HEK293 (cell line): ENCODE measurements at regions of chr19 and their contacts with region 1.

Region 1: DNA sequence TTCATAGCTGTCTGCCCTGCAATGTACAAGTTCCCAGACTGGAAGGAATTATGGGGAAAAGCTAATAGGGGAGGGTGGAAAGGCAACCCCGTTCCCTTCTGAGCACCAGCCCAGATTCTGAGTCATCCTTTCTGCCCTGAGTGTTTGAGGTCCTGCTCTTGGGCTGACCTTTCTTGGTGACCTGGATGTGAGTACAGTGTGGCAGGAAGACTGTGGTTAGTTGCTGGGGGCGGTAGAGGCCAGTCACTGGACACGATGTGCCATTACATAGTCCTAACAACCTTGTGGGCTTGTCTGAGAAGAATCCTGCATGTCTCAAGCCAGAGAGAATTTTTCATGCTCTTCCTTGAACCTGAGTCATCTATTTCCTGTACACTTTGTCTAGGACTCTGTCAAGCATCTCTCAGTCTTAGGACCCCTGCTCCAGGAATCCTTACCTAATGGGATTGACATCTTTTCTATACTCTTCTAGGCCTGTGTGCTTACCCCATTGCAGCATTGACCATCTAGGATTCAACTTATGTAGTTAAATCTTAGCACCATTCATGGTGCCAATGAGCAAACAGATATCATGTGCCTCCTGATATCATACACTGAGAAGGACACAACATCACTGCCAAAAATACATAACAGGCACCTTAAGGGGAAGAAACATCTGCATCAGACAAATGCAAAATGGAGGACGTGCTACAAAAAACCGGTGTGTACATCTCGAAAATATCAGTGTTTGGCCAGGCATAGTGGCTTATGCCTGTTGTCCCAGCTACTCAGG is 8.1 kb upstream of the ANGPTL4 start:
- H3K4me3 ChIP-seq: no peak overlapping the region
- H3K27ac ChIP-seq: no peak overlapping the region
- H3K4me1 ChIP-seq: no peaks in the 10 kb centered on the region
- CTCF ChIP-seq: no peak

Region 2: DNA sequence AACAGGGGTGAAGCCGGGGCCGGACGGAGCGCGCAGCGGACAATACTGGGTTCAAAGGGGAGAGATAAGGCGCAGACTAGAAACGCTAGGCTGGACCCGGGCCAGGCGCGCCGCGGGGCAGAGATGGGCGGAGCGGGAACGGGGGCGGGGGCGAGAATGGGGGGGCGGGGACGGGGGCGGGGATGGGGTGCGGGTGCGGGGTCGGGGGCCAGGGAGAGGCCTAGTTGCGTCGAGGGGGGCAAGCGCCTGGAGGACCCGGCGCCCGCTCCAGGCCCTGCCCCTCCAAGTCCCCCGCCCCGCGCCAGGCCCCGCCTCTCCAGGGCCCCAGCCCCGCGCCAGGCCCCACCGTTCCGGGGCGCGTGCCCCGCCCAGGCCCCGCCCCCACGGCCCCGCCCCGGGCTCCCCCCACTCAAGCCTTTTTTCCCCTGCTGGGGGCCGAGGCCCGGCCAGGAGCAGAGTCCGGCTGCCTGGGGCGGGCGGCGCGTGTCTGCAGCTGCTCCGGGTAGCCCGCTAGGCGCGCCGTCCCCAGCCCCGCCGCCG is 146.8 kb before region 1 on chr19 and contains the start of gene CERS4:
- CTCF ChIA-PET with region 1: no interaction called
- POLR2A ChIA-PET with region 1: no interaction called
- H3K4me3 ChIP-seq: peak within 1 kb of the TSS; percentile 63
- H3K27ac ChIP-seq: peak within 1 kb of the TSS; percentile 73; the same call in 1 of the 2 replicates
- H3K4me1 ChIP-seq: peaks cover 3% of the 10 kb centered on the region; the same call in 1 of the 2 replicates
- CTCF ChIP-seq: no peak

Region 3: DNA sequence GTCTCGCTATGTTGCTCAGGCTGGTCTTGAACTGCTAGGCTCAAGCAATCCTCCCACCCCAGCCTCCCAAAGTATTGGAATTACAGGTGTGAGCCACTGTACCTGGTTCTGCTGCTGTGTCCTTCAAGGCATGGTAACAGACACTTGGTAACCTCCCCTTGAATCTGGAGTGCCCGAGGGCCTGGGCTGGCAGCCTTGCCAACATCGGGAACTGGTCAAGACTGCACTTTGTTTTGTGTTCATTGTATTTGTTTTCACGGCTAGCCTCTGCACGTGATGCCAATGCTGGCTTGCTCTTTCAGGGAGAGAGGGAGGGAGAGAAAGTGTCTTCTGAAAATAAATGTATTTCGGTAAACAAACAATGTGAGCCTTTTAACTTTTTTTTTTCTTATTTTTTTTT is 134.7 kb before region 1 on chr19:
- CTCF ChIA-PET with region 1: no interaction called
- POLR2A ChIA-PET with region 1: no interaction called
- H3K4me3 ChIP-seq: no peak overlapping the region
- H3K27ac ChIP-seq: no peak overlapping the region
- H3K4me1 ChIP-seq: no peaks in the 10 kb centered on the region
- CTCF ChIP-seq: no peak

Region 4: GRCh38 chr19:8343483-8343844 is 12.4 kb before region 1 on chr19:
- CTCF ChIA-PET with region 1: interaction called, 11 read pairs
- POLR2A ChIA-PET with region 1: no interaction called
- H3K4me3 ChIP-seq: no peak overlapping the region
- H3K27ac ChIP-seq: no peak overlapping the region
- H3K4me1 ChIP-seq: no peaks in the 10 kb centered on the region
- CTCF ChIP-seq: no peak

Region 5: GRCh38 chr19:8389891-8390616 is 34.2 kb after region 1 on chr19 and contains the start of gene RAB11B:
- CTCF ChIA-PET with region 1: interaction called, 57 read pairs
- POLR2A ChIA-PET with region 1: interaction called, 24 read pairs
- H3K4me3 ChIP-seq: peak within 1 kb of the TSS; percentile 97
- H3K27ac ChIP-seq: peak within 1 kb of the TSS; percentile 98
- H3K4me1 ChIP-seq: peaks cover 3% of the 10 kb centered on the region; the same call in 1 of the 2 replicates
- CTCF ChIP-seq: no peak

Region 6: GRCh38 chr19:8404391-8405151 is 48.8 kb after region 1 on chr19:
- CTCF ChIA-PET with region 1: interaction called, 87 read pairs
- POLR2A ChIA-PET with region 1: no interaction called
- H3K4me3 ChIP-seq: no peak overlapping the region
- H3K27ac ChIP-seq: no peak overlapping the region
- H3K4me1 ChIP-seq: no peaks in the 10 kb centered on the region
- CTCF ChIP-seq: no peak

Region 7: GRCh38 chr19:8423817-8424223 is 68.0 kb after region 1 on chr19:
- CTCF ChIA-PET with region 1: interaction called, 17 read pairs
- POLR2A ChIA-PET with region 1: interaction called, 4 read pairs
- H3K4me3 ChIP-seq: no peak overlapping the region
- H3K27ac ChIP-seq: no peak overlapping the region
- H3K4me1 ChIP-seq: peaks cover 4% of the 10 kb centered on the region
- CTCF ChIP-seq: no peak

Region 8: GRCh38 chr19:8505680-8506401 is 150.0 kb after region 1 on chr19:
- CTCF ChIA-PET with region 1: interaction called, 15 read pairs
- POLR2A ChIA-PET with region 1: interaction called, 3 read pairs
- H3K4me3 ChIP-seq: peak overlapping the region; percentile 61
- H3K27ac ChIP-seq: peak overlapping the region; percentile 44; the same call in 1 of the 2 replicates
- H3K4me1 ChIP-seq: peaks cover 3% of the 10 kb centered on the region; the same call in 1 of the 2 replicates
- CTCF ChIP-seq: peak; percentile 91

Region 9: DNA sequence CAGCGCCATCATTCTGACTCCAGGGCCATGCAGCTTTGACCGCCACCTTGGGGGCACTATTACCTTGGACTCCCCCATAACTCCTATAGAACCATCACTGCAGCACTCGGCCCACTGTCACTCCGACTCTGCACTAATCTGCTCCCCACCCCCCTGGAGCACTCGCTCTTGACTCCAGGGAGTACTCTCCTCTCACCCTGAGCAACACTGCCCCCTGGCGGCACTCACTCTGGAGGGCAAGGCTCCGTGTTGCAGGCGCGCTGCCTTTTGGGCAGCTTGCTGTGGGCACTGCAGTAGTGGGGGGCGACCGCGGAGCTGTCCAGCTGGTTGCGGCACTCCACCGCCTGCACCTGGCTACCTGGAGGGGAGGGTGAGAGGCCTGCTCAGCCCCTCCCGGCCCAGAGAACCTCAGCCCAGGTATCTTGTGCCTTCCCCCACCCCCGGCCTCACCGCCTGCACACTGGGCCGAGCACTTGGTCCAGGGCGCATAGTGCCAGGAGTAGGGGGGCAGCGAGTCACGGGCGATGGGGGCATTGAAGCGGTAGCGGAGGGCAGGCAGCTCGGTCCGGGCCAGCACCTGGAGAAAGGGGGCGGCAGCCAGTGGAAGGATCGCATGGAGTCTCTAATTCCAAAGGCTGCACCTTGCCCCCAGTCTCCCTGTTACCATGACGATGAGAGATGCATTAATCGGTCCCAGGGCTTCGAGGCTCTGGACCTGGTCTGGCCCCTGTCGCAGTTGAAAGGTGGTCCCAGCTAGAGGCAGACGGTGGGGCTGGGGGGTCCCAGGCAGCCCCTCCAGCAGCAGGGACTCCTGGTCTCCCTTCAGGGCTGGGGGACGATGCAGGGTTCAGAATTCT is 230.3 kb after region 1 on chr19:
- CTCF ChIA-PET with region 1: interaction called, 36 read pairs
- POLR2A ChIA-PET with region 1: no interaction called
- H3K4me3 ChIP-seq: no peak overlapping the region
- H3K27ac ChIP-seq: no peak overlapping the region
- H3K4me1 ChIP-seq: no peaks in the 10 kb centered on the region
- CTCF ChIP-seq: peak; percentile 72